MCF 10A (cell line): ENCODE measurements at regions of chr19 and their contacts with region 1.

Region 1: GRCh38 chr19:10644260-10645007 is 9.7 kb upstream of the ILF3 start:
- DNase-seq: peak; percentile 75
- H3K4me3 Mint-ChIP-seq: no peak overlapping the region
- H3K27ac Mint-ChIP-seq: no peak overlapping the region
- H3K4me1 Mint-ChIP-seq: no peaks in the 10 kb centered on the region
- H3K27me3 Mint-ChIP-seq: no peaks in the 10 kb centered on the region
- CTCF ChIP-seq: peak; percentile 87

Region 2: GRCh38 chr19:10593820-10594637 is 50.4 kb before region 1 on chr19:
- CTCF ChIA-PET with region 1: interaction called, 13 read pairs
- POLR2A ChIA-PET with region 1: no interaction called
- intact Hi-C with region 1: no loop called
- DNase-seq: no peak
- H3K4me3 Mint-ChIP-seq: no peak overlapping the region
- H3K27ac Mint-ChIP-seq: no peak overlapping the region
- H3K4me1 Mint-ChIP-seq: no peaks in the 10 kb centered on the region
- H3K27me3 Mint-ChIP-seq: no peaks in the 10 kb centered on the region
- CTCF ChIP-seq: no peak

Region 3: GRCh38 chr19:10695401-10696398 is 51.3 kb after region 1 on chr19:
- CTCF ChIA-PET with region 1: interaction called, 6 read pairs
- POLR2A ChIA-PET with region 1: no interaction called
- intact Hi-C with region 1: loop called (anchors 2 kb)
- DNase-seq: peak; percentile 95
- H3K4me3 Mint-ChIP-seq: peak overlapping the region; percentile 66
- H3K27ac Mint-ChIP-seq: no peak overlapping the region
- H3K4me1 Mint-ChIP-seq: peaks cover 11% of the 10 kb centered on the region
- H3K27me3 Mint-ChIP-seq: no peaks in the 10 kb centered on the region
- CTCF ChIP-seq: no peak